PC-9 (cell line): ENCODE measurements at regions of chr6 and their contacts with region 1.

Region 1: DNA sequence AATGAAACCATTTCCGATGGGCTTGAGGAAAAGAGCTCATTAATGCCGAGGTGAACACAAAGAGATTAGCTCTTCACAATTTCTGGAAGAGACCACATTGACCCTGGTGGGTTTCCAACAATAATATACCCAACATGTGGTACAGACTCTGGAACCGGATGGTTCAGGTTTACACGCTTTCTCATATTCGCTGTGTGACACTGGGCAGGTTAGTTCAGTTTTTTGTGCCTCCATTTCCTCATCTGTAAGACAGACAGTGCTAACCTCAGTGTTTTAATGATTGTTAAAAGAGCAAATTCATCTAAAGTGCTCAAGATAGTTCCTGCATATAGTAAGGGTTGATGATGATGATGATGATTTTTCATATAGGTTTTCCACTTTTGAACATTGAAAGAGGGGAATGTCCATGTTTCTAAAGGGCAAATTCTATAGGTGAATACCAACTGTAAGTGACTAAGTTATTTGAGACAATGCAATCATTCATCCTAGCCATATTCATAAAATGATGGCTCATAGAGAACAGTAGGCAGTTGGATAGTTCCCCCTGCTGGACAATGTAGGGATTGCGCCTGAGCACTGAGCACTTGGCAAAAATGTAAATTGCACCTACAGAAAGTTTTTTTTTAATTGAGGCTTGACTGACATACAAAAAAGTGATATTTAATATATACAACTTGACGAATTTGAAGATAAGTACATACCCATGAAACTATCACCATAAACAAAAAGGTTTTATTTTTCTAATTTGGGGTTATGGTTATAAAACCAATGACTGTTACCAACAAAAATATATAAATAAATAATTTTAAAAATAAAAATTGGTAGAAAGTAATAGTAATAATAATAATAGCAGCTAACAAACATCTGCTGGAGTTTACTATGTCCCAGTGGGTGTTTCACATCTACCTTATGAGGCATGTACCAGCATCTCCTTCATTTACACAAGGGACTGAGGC is 2.1 kb upstream of the PERP start:
- DNase-seq: peak; percentile 70 to 78
- H3K4me3 ChIP-seq: no peak overlapping the region; the same call in 1 of the 2 replicates
- H3K27ac ChIP-seq: peak overlapping the region; percentile 78; the same call in 1 of the 2 replicates
- H3K4me1 ChIP-seq: peaks cover 30% of the 10 kb centered on the region
- H3K27me3 ChIP-seq: no peaks in the 10 kb centered on the region
- CTCF ChIP-seq: peak; percentile 99

Region 2: DNA sequence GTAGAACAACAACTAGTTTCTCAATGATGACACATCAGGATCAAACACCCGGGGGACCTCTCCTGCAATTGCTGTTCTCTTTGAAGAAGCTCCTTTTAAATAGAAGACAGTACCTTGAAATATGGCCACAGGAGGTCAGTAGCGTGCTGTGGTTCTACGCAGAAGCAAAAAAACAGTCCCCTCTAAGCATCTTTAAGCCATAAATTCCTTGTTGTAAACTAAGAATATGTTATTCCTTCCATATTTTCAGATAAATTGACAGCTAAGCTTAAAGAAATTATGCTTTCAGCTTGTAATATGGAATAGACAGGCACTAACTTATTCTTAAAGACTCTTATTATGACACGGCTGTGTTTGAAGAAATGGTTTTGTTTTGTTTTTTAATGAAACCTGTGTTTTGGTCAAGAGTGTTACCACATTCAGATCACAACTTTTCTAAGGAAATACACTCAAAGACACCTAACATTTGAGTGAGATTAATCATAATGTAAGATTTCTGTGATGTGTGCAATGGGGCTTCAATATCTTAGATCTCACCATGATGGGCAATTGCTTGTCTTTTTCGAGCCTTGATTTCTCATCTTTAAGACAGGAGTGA is 1014.8 kb before region 1 on chr6:
- CTCF ChIA-PET with region 1: no interaction called
- POLR2A ChIA-PET with region 1: no interaction called
- intact Hi-C with region 1: loop called (anchors 2 kb)
- DNase-seq: peak; percentile 53 to 82
- H3K4me3 ChIP-seq: no peak overlapping the region
- H3K27ac ChIP-seq: no peak overlapping the region
- H3K4me1 ChIP-seq: peaks cover 5% of the 10 kb centered on the region
- H3K27me3 ChIP-seq: no peaks in the 10 kb centered on the region
- CTCF ChIP-seq: peak; percentile 92

Region 3: DNA sequence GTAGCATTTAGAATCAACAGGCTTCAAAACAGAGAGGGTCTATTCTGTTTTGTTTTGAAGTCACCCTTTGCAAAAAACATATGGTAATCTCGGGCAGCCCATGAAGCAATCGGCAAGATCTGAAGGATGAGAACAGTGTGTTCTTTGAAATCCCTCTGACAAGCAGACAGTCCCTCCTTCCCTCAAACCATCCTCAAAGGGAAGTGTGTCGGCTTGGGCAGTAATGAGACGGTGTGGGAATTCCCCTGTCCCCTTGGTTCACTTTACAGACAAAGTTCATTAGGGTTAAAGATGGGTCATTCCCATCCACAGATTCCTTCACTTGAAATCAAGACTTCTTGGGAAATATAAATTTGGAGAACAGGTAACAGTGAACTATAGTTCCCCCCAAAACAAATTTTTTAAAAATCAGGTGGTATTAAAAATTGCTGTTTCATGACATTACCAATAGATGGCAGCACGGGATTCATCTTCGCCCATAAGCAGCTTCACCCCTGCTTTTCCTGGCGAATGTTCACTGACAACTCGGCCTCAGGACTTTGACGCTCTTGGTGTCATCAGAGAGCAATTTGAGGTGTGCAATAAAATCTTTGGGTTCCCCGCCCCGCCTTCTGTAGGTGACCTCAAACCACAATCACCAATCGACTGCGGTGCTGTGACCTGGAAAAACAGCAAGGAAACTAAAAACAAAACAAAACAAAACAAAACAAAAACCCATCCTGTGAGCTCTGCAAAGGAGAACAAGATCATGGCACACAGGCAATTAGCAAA is 401.5 kb before region 1 on chr6:
- CTCF ChIA-PET with region 1: no interaction called
- POLR2A ChIA-PET with region 1: no interaction called
- intact Hi-C with region 1: loop called (anchors 1 kb)
- DNase-seq: peak; percentile 56 to 94
- H3K4me3 ChIP-seq: peak overlapping the region; percentile 6; the same call in 1 of the 2 replicates
- H3K27ac ChIP-seq: peak overlapping the region; percentile 89
- H3K4me1 ChIP-seq: peaks cover 33% of the 10 kb centered on the region
- H3K27me3 ChIP-seq: no peaks in the 10 kb centered on the region
- CTCF ChIP-seq: peak; percentile 95

Region 4: DNA sequence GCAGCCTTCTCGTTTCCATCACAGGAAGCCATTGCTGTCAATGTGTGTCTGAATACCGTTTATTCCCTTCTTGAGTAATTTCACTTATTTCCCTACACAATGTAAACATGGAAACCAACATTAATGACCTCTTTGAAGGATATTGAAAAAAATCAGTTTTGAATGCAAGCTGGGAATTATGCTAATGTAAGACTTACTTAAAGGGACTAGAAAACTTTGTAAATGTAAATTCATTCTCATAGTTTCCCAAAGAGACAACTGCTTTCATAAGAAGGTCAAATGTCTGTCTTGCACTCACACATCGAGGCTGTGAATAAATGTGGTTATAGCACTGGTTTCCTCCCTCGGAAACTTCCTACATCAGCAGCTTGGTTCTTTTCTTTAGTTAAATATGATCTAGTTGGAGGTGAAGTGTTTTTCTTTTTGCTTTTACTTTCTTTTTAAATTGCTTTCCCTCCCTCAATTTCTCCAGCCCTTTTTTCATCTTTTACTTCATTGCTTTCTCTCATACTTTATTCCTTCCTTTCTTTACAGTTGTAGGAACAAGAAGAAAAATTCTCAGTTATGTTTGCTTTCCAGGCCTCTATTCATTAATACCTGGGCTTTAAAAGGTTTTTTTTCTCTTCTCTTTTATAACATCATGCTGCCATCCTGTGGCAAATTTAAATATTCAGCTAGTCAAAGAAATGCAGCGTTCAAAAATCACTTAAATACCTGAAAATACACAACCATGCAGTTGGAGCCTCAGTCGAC is 134.0 kb before region 1 on chr6:
- CTCF ChIA-PET with region 1: interaction called, 5 read pairs
- POLR2A ChIA-PET with region 1: no interaction called
- intact Hi-C with region 1: loop called (anchors 1 kb)
- DNase-seq: no peak
- H3K4me3 ChIP-seq: no peak overlapping the region
- H3K27ac ChIP-seq: no peak overlapping the region
- H3K4me1 ChIP-seq: peaks cover 36% of the 10 kb centered on the region
- H3K27me3 ChIP-seq: no peaks in the 10 kb centered on the region
- CTCF ChIP-seq: peak; percentile 77

Region 5: GRCh38 chr6:138031850-138032249 is 77.5 kb before region 1 on chr6:
- CTCF ChIA-PET with region 1: no interaction called
- POLR2A ChIA-PET with region 1: no interaction called
- intact Hi-C with region 1: loop called (anchors 1 kb)
- DNase-seq: no peak
- H3K4me3 ChIP-seq: no peak overlapping the region
- H3K27ac ChIP-seq: no peak overlapping the region
- H3K4me1 ChIP-seq: peaks cover 32% of the 10 kb centered on the region
- H3K27me3 ChIP-seq: no peaks in the 10 kb centered on the region
- CTCF ChIP-seq: no peak

Region 6: DNA sequence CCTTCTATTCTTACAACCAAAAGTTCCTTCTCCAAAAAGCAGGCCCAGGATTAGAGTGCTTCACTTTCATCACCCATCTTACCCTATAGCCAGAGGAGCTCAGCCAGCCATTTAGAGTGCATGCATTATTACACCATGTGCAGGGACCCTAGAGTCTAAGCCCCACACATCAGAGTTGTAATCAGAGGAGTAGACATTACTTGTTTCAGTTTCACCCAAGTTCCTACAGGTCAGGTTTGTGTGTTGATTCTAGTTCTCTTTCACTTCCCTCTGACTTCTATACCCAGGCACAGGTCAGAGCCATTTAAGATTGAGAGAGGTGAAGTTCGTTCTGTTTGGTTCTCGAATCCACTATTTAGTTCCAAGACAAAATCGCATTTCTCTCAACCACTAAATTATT is 36.1 kb after region 1 on chr6:
- CTCF ChIA-PET with region 1: no interaction called
- POLR2A ChIA-PET with region 1: no interaction called
- intact Hi-C with region 1: no loop called
- DNase-seq: peak in 1 of 2 experiments; percentile 3
- H3K4me3 ChIP-seq: no peak overlapping the region
- H3K27ac ChIP-seq: no peak overlapping the region
- H3K4me1 ChIP-seq: no peaks in the 10 kb centered on the region
- H3K27me3 ChIP-seq: no peaks in the 10 kb centered on the region
- CTCF ChIP-seq: no peak

Region 7: GRCh38 chr6:138336221-138336620 is 226.9 kb after region 1 on chr6:
- CTCF ChIA-PET with region 1: no interaction called
- POLR2A ChIA-PET with region 1: no interaction called
- intact Hi-C with region 1: no loop called
- DNase-seq: no peak
- H3K4me3 ChIP-seq: no peak overlapping the region
- H3K27ac ChIP-seq: no peak overlapping the region
- H3K4me1 ChIP-seq: no peaks in the 10 kb centered on the region
- H3K27me3 ChIP-seq: no peaks in the 10 kb centered on the region
- CTCF ChIP-seq: no peak